Mucosa of descending colon (tissue), 3 donors: ENCODE measurements at regions of chr2 and their contacts with region 1.

Region 1: DNA sequence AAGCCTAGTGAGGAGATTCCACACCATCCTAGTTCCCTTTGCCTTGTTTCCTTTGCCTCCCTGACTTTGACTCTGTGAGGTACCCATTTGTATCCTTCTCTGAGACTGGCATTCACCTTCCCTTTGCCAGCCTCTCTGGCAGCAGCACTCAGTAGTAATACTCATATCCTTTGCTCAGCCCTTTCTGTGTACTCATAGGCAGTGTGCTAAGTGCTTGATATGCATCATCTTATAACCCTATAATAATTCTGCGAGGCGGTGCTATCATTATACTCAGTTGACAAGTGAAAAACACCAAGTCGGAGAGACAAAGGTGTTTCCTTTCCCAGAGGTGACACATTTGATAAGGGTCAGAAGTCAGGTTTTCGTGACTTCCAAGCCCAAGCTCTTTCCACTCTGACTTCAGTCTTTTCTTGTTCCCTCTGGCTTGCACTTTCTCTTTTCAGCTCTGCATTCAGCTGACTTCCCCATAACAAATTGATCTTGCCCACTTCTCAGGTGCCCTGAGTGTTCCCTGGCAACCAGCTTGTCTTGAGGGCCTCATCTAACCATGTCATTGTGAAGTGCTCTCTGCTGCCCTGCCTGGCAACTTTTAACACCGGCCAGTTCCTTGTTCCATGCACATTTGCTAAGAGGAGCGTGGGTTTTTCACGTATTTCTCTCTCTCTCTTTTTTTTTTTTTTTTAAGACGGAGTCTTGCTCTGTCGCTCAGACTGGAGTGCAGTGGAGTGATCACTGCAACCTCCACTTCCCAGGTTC is 94.5 kb upstream of the UPP2 start:
- DNase-seq: no peak
- ATAC-seq: peak; percentile 58
- H3K4me3 ChIP-seq: no peak overlapping the region
- H3K4me1 ChIP-seq: no peaks in the 10 kb centered on the region
- CTCF ChIP-seq: no peak

Region 2: DNA sequence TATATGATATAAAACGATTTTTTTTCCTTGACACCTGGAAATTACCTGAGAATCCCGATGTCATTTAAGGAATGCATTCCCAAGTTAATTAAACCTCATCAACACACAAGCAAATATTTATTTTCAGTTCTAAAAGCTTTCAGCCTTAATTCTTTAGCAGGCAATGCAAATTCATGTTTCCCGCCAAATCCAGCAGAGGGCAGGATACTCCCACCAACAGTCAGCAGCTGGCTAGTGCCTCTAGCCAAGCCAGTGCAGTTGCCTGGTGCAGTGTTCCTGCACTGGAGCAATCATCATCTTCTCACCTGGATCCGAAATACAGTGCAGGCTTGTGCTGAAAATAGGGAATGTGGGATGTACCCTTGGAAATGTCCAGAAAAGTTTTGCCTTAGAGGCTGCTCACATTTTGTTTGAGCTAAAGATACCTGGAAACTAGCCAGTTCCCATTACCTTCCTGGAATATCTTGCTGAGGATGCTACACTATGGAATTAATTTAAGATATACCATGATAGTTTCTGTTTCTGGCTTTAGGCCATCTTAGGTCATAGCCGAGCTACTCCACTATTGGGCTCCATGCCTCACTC is 514.9 kb before region 1 on chr2:
- intact Hi-C with region 1: loop called (anchors 5 to 10 kb)
- DNase-seq: peak; percentile 53 to 80 (median 66)
- ATAC-seq: peak; percentile 65
- H3K4me3 ChIP-seq: no peak overlapping the region
- H3K4me1 ChIP-seq: peaks cover 10% of the 10 kb centered on the region
- CTCF ChIP-seq: peak; percentile 50

Region 3: DNA sequence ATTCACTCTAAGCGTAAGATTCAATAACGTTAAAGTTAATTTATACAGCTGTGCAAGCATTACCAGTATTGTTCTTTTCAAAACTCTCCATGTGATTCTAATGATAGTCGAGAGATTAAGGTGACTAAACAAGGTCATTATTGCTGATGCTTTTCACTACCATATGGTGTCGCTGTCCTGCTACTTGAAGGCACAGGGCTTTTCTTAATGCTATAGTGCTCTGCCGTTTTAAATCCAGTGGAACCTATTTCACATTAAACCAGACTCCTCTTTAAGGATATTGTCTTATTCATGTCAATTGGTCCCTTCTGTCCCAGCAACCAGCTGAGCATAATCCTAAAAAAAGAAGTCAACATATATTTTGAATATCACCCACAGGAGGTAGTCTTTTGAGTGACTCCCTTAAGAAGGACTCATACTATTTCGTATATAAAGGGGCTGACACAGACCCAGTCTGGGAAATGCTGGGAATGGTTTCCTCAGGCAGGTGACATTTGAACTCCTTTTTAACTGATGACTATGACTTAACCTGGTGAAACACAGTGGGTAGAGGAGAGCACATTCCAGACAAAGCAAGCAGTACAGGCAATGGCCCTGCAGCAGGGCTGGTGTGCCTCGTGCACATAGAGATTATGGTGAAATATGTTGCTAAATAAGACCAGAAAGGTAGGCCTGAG is 509.4 kb before region 1 on chr2:
- intact Hi-C with region 1: loop called (anchors 5 to 10 kb)
- DNase-seq: no peak
- ATAC-seq: peak; percentile 92
- H3K4me3 ChIP-seq: no peak overlapping the region
- H3K4me1 ChIP-seq: no peaks in the 10 kb centered on the region
- CTCF ChIP-seq: peak; percentile 51

Region 4: DNA sequence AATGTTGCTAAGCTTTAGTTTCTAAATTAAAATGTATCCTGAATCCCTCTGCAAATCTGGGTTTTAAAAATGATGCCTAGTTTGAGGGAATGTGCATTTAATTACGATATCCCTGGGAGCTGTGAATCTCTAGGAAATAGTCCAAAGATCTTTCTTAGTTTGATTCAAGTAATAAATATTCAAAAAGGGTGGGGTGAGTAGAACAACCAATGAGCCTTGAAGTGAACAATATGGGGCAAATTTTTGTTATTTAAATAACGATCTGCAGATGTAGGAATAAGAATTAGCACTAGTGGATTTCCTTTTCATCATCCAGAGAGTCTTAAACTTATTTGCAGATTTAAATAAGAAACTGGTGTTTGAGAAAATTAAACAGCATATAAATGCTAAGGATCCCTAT is 237.3 kb before region 1 on chr2:
- intact Hi-C with region 1: loop called in 1 of 2 experiments (anchors 5 kb)
- DNase-seq: no peak
- ATAC-seq: no peak
- H3K4me3 ChIP-seq: no peak overlapping the region
- H3K4me1 ChIP-seq: no peaks in the 10 kb centered on the region
- CTCF ChIP-seq: no peak

Region 5: DNA sequence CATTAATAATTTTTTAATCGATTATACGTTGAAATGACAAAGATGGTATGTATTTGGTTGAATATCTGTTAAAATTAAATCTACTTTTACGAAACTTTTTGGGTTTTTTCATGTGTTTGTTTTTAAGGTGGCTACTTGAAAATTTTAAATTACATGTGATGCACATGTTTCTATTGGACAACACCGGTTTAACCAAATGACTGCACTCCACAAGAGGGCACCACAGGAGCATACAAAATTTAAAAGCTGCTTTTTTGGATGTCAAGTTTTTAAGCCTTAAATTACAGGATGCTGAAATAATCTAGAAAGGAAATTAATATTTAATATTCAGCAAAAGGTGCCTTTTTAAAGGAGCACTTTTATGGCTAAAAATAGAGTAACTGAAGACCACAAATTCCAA is 229.7 kb before region 1 on chr2:
- intact Hi-C with region 1: loop called (anchors 2 to 5 kb)
- DNase-seq: peak in 2 of 3 donors; percentile 18 to 77
- ATAC-seq: no peak
- H3K4me3 ChIP-seq: no peak overlapping the region
- H3K4me1 ChIP-seq: no peaks in the 10 kb centered on the region
- CTCF ChIP-seq: peak; percentile 43

Region 6: DNA sequence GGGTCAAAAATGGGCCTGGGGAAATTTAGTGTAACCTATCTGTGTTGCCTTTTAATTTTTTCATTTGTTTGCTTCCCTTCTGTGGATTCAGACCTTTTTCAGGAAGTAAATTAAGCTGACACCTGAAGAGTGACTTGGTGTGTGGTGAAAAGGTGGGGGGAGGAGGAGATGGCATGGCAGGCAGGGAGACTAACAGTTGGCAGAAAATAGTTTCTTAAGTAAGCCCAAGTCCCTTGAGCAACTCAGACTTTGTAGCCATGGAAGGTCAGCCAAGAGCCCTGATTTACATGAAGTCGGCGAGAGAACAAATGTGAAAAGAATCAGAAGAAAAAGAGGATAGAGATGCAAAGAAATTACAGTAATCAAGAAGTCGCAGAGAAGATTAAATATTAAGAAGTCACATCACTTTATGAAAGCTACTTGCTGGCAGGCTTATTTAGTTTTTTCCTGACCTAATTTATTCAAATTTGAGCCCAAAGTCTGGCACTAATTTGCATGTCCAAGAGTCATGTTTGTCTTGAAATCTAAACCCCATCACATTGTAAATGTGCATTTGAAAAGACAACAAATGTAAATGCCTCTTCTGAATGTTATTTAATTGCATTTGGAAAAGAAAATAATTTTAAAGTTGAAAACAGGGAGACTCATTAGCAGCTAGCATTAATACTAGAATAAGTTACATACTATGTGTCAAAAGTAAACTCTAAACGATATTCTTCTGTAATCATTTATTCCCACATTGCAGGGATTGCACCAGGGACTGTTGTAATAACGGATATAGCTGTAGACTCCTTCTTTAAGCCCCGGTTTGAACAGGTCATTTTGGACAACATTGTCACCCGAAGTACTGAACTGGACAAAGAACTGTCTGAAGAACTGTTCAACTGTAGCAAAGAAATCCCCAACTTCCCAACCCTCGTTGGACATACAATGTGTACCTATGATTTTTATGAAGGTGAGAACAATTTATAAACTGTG is 113.8 kb after region 1 on chr2:
- intact Hi-C with region 1: no loop called
- DNase-seq: no peak
- ATAC-seq: peak; percentile 42
- H3K4me3 ChIP-seq: no peak overlapping the region
- H3K4me1 ChIP-seq: peaks cover 17% of the 10 kb centered on the region
- CTCF ChIP-seq: no peak

Region 7: DNA sequence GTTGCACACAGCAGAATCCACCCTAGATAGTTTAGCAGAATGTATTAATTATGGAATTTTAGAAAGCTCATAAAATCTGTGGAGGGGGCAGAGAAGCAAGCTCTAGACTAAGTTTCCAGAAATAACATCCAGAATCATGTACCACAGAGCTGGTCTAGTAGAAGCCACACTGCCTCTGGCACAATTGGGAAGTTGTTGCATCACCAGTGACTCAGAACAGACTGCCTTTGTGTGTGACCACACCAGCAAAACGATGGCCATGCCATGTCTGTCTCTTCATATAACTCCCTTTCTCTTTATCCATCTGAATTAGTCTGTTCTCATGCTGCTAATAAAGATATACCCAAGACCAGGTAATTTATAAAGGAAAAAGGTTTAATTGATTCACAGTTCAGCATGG is 290.5 kb after region 1 on chr2:
- intact Hi-C with region 1: no loop called
- DNase-seq: no peak
- ATAC-seq: no peak
- H3K4me3 ChIP-seq: no peak overlapping the region
- H3K4me1 ChIP-seq: no peaks in the 10 kb centered on the region
- CTCF ChIP-seq: no peak

Region 8: GRCh38 chr2:158502974-158503373 is 495.8 kb after region 1 on chr2:
- intact Hi-C with region 1: no loop called
- DNase-seq: no peak
- ATAC-seq: no peak
- H3K4me3 ChIP-seq: no peak overlapping the region
- H3K4me1 ChIP-seq: no peaks in the 10 kb centered on the region
- CTCF ChIP-seq: no peak